IMR-90 (cell line): ENCODE measurements at regions of chr16 and their contacts with region 1.

Region 1: GRCh38 chr16:20849587-20850390 is 43.5 kb downstream of the REXO5 start:
- DNase-seq: peak; percentile 68
- ATAC-seq: peak; percentile 73
- H3K4me3 ChIP-seq: no peak overlapping the region
- H3K27ac ChIP-seq: no peak overlapping the region
- H3K4me1 ChIP-seq: peaks cover 13% of the 10 kb centered on the region
- H3K27me3 ChIP-seq: no peaks in the 10 kb centered on the region
- CTCF ChIP-seq: peak; percentile 98
- POLR2A ChIP-seq: peak; percentile 56; the same call in 1 of the 2 replicates
- RAD21 ChIP-seq: peak; percentile 98

Region 2: DNA sequence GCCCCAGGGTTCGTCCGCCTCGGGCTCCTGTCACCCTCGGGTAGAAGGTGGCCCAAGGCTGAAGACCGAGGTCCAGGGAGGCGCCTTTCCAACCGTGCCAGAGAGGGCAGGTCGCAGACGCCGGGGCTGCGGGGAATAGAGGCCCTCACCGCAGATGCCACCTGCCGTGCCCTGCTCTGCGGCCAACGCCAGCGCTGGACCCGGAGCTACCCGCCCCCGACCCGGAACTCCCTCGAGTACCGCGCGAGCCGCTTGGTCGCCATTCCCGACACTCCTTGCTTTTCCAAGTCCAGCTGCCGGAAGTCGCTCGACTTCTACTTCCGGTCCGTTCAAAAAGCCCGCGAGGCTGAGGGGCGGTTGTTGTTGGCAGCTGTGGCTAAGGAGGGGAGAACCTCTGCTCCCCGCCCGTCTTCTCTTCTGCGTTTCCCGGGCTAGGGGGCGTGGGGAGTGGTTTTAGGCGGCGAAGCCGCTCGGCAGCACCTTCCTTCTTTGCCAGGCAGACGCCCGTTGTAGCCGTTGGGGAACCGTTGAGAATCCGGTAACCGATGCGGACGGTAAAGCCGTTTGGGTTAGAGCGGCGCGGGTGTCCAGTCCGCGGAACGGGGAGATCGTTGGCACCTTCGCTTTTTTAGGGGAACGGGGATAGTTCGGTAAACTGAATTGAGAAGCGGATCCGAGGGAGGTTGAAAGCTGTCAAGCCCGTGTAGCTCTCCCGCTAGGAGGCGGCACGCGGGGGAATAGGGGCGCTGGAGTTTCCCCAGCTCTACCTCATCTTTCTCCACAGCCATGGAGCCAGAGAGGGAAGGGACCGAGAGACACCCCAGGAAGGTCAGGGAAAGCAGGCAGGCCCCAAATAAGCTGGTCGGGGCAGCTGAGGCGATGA is 43.4 kb before region 1 on chr16 and contains the starts of genes ERI2 and REXO5:
- CTCF ChIA-PET with region 1: no interaction called
- POLR2A ChIA-PET with region 1: no interaction called
- dilution Hi-C with region 1: no loop called
- in situ Hi-C with region 1: no loop called
- intact Hi-C with region 1: loop called (anchors 2 kb)
- DNase-seq: peak; percentile 94
- ATAC-seq: peak; percentile 90
- H3K4me3 ChIP-seq: peak within 1 kb of the TSS; percentile 62
- H3K27ac ChIP-seq: peak within 1 kb of the TSS; percentile 73
- H3K4me1 ChIP-seq: no peaks in the 10 kb centered on the region
- H3K27me3 ChIP-seq: no peaks in the 10 kb centered on the region
- CTCF ChIP-seq: peak; percentile 53
- POLR2A ChIP-seq: peak; percentile 79
- RAD21 ChIP-seq: peak; percentile 3; the same call in 1 of the 2 replicates
- total RNA-seq, gene ERI2: 10.2 and 15.0 TPM in 2 replicates
- total RNA-seq, gene REXO5: 6.1 and 7.0 TPM in 2 replicates

Region 3: GRCh38 chr16:20944861-20945574 is 95.2 kb after region 1 on chr16:
- CTCF ChIA-PET with region 1: no interaction called
- POLR2A ChIA-PET with region 1: no interaction called
- dilution Hi-C with region 1: no loop called
- in situ Hi-C with region 1: no loop called
- intact Hi-C with region 1: loop called (anchors 5 kb)
- DNase-seq: peak; percentile 16
- ATAC-seq: no peak; the same call in 1 of the 2 replicates
- H3K4me3 ChIP-seq: no peak overlapping the region
- H3K27ac ChIP-seq: no peak overlapping the region
- H3K4me1 ChIP-seq: no peaks in the 10 kb centered on the region
- H3K27me3 ChIP-seq: no peaks in the 10 kb centered on the region; the same call in 1 of the 2 replicates
- CTCF ChIP-seq: no peak
- POLR2A ChIP-seq: no peak
- RAD21 ChIP-seq: peak; percentile 17; the same call in 1 of the 2 replicates

Region 4: GRCh38 chr16:21001262-21001661 is 151.5 kb after region 1 on chr16:
- CTCF ChIA-PET with region 1: interaction called, 4 read pairs
- POLR2A ChIA-PET with region 1: no interaction called
- dilution Hi-C with region 1: no loop called
- in situ Hi-C with region 1: no loop called
- intact Hi-C with region 1: loop called (anchors 1 kb)
- DNase-seq: peak; percentile 4
- ATAC-seq: no peak; the same call in 1 of the 2 replicates
- H3K4me3 ChIP-seq: no peak overlapping the region
- H3K27ac ChIP-seq: no peak overlapping the region
- H3K4me1 ChIP-seq: no peaks in the 10 kb centered on the region
- H3K27me3 ChIP-seq: peaks cover 3% of the 10 kb centered on the region
- CTCF ChIP-seq: peak; percentile 36
- POLR2A ChIP-seq: no peak
- RAD21 ChIP-seq: peak; percentile 44

Region 5: GRCh38 chr16:21088646-21089538 is 239.1 kb after region 1 on chr16:
- CTCF ChIA-PET with region 1: interaction called, 7 read pairs
- POLR2A ChIA-PET with region 1: no interaction called
- dilution Hi-C with region 1: no loop called
- in situ Hi-C with region 1: loop called (anchors 5 kb)
- intact Hi-C with region 1: loop called (anchors 1 kb)
- DNase-seq: peak; percentile 69
- ATAC-seq: peak; percentile 76
- H3K4me3 ChIP-seq: no peak overlapping the region
- H3K27ac ChIP-seq: peak overlapping the region; percentile 17; the same call in 1 of the 2 replicates
- H3K4me1 ChIP-seq: no peaks in the 10 kb centered on the region
- H3K27me3 ChIP-seq: no peaks in the 10 kb centered on the region
- CTCF ChIP-seq: no peak
- POLR2A ChIP-seq: no peak
- RAD21 ChIP-seq: no peak

Region 6: DNA sequence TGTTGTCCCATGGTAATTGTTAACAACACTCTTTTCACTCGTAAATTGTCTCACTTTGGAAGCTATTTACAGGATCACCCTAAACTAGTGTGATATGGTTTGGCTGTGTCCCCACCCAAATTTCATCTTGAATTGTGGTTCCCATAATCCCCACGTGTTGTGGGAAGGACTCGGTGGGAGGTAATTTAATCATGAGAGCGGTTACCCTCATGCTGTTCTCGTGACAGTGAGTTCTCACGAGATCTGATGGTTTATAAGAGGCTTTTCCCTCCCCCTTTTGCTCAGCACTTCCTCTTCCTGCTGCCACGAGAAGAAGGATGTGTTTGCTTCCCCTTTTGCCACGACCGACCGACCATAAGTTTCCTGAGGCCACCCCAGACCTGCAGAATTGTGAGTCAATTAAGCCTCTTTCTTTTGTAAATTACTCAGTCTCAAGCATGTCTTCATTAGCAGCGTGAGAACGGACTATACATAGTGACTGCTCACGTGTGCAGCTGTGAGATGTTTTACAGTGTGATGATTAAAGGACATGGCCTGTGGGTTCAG is 266.4 kb after region 1 on chr16:
- CTCF ChIA-PET with region 1: no interaction called
- POLR2A ChIA-PET with region 1: no interaction called
- dilution Hi-C with region 1: no loop called
- in situ Hi-C with region 1: no loop called
- intact Hi-C with region 1: no loop called
- DNase-seq: no peak
- ATAC-seq: no peak
- H3K4me3 ChIP-seq: peak overlapping the region; percentile 32; the same call in 1 of the 2 replicates
- H3K27ac ChIP-seq: no peak overlapping the region
- H3K4me1 ChIP-seq: no peaks in the 10 kb centered on the region
- H3K27me3 ChIP-seq: peaks cover 3% of the 10 kb centered on the region; the same call in 1 of the 2 replicates
- CTCF ChIP-seq: no peak
- POLR2A ChIP-seq: no peak
- RAD21 ChIP-seq: no peak

Region 7: DNA sequence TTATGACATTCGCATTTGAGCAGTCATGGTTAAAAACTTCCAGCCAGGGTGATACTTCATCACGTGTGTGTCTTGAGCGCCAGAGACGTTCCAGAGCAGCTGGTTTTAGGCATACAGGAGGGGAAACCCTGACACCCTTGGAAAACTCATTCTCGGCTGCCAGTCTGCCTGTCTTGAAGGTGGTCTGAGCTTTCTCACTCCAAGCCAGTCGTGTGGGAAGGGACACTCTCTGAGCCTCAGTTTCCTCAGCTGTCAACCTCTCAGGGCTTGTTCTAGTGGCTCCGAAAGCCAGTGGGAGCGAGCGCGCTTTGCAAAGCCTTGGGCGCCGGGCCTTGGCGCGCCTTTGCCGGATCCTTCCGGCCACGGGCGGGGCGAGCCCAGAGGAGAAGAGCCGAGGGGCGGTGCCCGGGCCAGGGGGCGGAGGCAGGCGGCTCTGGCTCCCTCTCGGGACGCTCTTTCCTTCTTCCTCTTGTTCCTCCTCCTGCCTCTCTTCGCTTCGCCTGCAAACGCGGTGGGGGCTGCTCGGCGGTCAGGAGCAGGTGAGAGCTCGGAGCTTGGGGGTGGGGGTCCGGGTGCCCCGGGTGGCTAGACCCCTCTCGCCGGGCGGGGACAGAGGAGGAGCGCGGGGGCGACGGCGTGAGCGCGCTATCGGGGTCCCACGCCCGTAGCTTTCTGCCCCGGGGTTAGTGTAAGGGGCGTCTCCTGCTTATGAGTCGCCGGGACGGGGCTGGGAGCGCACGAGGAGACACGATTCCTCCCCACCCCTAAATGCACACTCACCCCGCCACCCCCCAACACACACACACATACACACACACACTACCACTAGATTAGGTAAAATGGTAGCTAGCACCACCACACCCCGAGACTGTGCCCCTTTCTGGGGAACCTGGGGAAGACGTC is 308.7 kb after region 1 on chr16 and contains the start of gene LDAF1:
- CTCF ChIA-PET with region 1: no interaction called
- POLR2A ChIA-PET with region 1: no interaction called
- dilution Hi-C with region 1: no loop called
- in situ Hi-C with region 1: loop called (anchors 5 kb)
- intact Hi-C with region 1: loop called (anchors 1 kb)
- DNase-seq: peak; percentile 63
- ATAC-seq: peak; percentile 96
- H3K4me3 ChIP-seq: peak within 1 kb of the TSS; percentile 81
- H3K27ac ChIP-seq: peak within 1 kb of the TSS; percentile 75
- H3K4me1 ChIP-seq: peaks cover 9% of the 10 kb centered on the region
- H3K27me3 ChIP-seq: no peaks in the 10 kb centered on the region
- CTCF ChIP-seq: 0 out of 2 replicates have a peak, but pooled peaks have one; percentile 5
- POLR2A ChIP-seq: no peak
- RAD21 ChIP-seq: peak; percentile 12; the same call in 1 of the 2 replicates
- total RNA-seq, gene LDAF1: 51.4 and 62.2 TPM in 2 replicates

Region 8: GRCh38 chr16:21300309-21301167 is 450.7 kb after region 1 on chr16:
- CTCF ChIA-PET with region 1: no interaction called
- POLR2A ChIA-PET with region 1: no interaction called
- dilution Hi-C with region 1: no loop called
- in situ Hi-C with region 1: loop called (anchors 5 kb)
- intact Hi-C with region 1: loop called (anchors 1 kb)
- DNase-seq: peak; percentile 100
- ATAC-seq: peak; percentile 84
- H3K4me3 ChIP-seq: peak overlapping the region; percentile 71
- H3K27ac ChIP-seq: peak overlapping the region; percentile 11; the same call in 1 of the 2 replicates
- H3K4me1 ChIP-seq: peaks cover 5% of the 10 kb centered on the region
- H3K27me3 ChIP-seq: no peaks in the 10 kb centered on the region
- CTCF ChIP-seq: peak; percentile 99
- POLR2A ChIP-seq: peak; percentile 75
- RAD21 ChIP-seq: peak; percentile 96